ENCODE measurements at regions of chr5 and their contacts with region 1.

Region 1: GRCh38 chr5:142713121-142713706 is 27.3 kb upstream of the FGF1 start:
- DNase-seq: peak; percentile 79 to 90 (median 86)
- H3K4me3 ChIP-seq: peak overlapping the region; percentile 39 to 51
- H3K4me3 Mint-ChIP-seq: peak overlapping the region; percentile 59 to 78 (median 74)
- H3K27ac ChIP-seq: peak overlapping the region; percentile 23
- H3K27ac Mint-ChIP-seq: peak overlapping the region in 3 of 7 donors; percentile 22 to 72 (median 23)
- H3K4me1 ChIP-seq: peaks cover 11% of the 10 kb centered on the region
- H3K4me1 Mint-ChIP-seq: peaks cover 7 to 18% (median 10%) of the 10 kb centered on the region in 4 donors
- H3K27me3 ChIP-seq: no peaks in the 10 kb centered on the region
- H3K27me3 Mint-ChIP-seq: peaks cover 0 to 3% of the 10 kb centered on the region in 2 donors

Region 2: DNA sequence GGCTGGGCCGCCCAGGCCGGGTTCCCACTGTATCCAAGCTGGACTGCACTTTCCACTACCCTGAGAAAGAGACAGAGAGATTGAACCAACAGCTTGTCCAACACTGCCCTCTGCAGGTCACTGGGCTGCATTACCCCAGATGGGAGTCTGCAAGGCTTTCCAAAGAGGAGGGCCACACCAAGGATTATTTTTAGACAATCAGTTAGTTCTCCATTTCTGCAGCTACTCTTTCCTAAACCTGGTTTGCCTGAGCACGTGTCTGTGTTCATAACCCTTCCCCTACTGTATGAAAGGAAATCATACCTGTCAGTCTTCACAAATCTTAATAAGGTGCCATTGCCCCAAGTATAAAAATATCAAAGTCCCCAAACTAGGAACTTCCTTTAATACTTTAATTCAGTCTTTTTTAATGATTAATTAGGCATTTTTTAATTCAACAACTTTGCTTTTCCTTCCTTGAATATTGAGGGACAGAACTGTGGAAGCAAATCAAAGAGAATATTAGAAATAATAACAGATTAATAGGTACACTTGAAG is 14.0 kb before region 1 on chr5:
- CTCF ChIA-PET with region 1: interaction called, 71 read pairs
- POLR2A ChIA-PET with region 1: interaction called, 3 read pairs
- intact Hi-C with region 1: no loop called
- DNase-seq: peak; percentile 68 to 73 (median 72)
- H3K4me3 ChIP-seq: no peak overlapping the region
- H3K4me3 Mint-ChIP-seq: no peak overlapping the region
- H3K27ac ChIP-seq: no peak overlapping the region
- H3K27ac Mint-ChIP-seq: no peak overlapping the region
- H3K4me1 ChIP-seq: no peaks in the 10 kb centered on the region
- H3K4me1 Mint-ChIP-seq: peaks cover 0 to 2% (median under 1%) of the 10 kb centered on the region in 4 donors
- H3K27me3 ChIP-seq: no peaks in the 10 kb centered on the region
- H3K27me3 Mint-ChIP-seq: peaks cover 2% of the 10 kb centered on the region in 2 donors

Region 3: GRCh38 chr5:142748568-142749249 is 35.5 kb after region 1 on chr5:
- CTCF ChIA-PET with region 1: interaction called, 39 read pairs
- POLR2A ChIA-PET with region 1: no interaction called
- intact Hi-C with region 1: loop called (anchors 2 kb)
- DNase-seq: peak in 4 of 5 donors; percentile 40 to 49 (median 45)
- H3K4me3 ChIP-seq: no peak overlapping the region
- H3K4me3 Mint-ChIP-seq: no peak overlapping the region
- H3K27ac ChIP-seq: no peak overlapping the region
- H3K27ac Mint-ChIP-seq: no peak overlapping the region
- H3K4me1 ChIP-seq: no peaks in the 10 kb centered on the region
- H3K4me1 Mint-ChIP-seq: peaks cover 0 to 11% (median 0%) of the 10 kb centered on the region in 4 donors
- H3K27me3 ChIP-seq: no peaks in the 10 kb centered on the region
- H3K27me3 Mint-ChIP-seq: peaks cover 0 to 6% of the 10 kb centered on the region in 2 donors

Region 4: DNA sequence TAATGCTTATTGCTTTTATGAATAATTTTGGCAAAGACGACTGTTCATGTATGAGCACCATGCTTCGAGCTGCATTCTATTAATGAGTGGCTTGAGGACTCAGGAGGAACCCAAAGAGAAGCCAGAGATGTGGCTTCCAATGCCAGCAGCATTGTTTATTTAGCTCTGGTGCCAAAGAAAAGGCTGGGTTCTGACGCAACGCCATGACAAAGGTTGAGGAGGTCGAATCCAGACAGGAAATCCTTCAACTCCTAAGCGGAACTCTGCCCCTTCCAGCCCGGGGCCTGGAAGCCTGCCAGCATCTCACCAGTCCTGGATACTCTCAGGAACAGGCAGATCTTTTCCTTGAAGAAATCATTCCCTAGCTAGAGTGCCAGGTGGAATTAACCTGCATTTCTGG is 161.3 kb after region 1 on chr5:
- CTCF ChIA-PET with region 1: interaction called, 252 read pairs
- POLR2A ChIA-PET with region 1: no interaction called
- intact Hi-C with region 1: no loop called
- DNase-seq: no peak
- H3K4me3 ChIP-seq: no peak overlapping the region
- H3K4me3 Mint-ChIP-seq: no peak overlapping the region
- H3K27ac ChIP-seq: no peak overlapping the region
- H3K27ac Mint-ChIP-seq: no peak overlapping the region
- H3K4me1 ChIP-seq: no peaks in the 10 kb centered on the region
- H3K4me1 Mint-ChIP-seq: peaks cover 0 to 3% (median 0%) of the 10 kb centered on the region in 4 donors
- H3K27me3 ChIP-seq: no peaks in the 10 kb centered on the region
- H3K27me3 Mint-ChIP-seq: no peaks in the 10 kb centered on the region

Region 5: DNA sequence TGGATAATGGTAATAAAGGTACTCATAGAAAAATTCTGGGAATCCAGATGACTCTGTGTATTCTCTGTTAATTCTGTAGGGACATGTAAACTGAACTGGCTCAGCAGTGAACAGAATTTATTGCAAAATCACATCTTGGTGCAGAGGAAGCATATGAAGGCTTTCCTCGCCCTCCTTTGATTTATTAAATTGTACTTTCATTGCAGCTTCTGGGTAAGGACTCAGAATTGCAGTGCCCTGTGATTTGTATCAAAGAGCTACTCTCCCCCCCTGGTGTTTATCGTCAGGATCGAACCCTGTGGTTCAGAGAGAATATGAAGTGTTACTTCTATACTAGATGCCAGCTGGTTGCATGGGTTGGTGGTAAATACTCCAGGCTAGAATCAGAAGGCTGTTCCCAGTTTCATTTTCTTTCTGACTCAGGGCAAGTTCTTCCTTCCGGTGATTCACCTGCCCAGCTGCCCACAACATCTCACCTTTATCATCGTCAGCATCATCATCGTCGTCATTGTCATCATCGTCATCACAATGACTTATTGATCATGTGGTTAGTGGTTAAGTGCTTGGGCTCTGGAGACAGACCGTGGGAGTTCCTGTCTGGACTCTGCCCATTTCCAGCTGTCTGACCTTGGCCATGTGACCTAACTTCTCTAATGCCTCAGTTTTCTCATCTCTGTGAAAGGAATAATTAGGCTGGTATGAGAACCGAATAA is 295.8 kb after region 1 on chr5:
- CTCF ChIA-PET with region 1: interaction called, 4 read pairs
- POLR2A ChIA-PET with region 1: no interaction called
- intact Hi-C with region 1: loop called (anchors 2 kb)
- DNase-seq: peak; percentile 83 to 96 (median 87)
- H3K4me3 ChIP-seq: no peak overlapping the region
- H3K4me3 Mint-ChIP-seq: peak overlapping the region; percentile 23 to 71 (median 68)
- H3K27ac ChIP-seq: peak overlapping the region; percentile 63
- H3K27ac Mint-ChIP-seq: peak overlapping the region; percentile 84 to 97 (median 94)
- H3K4me1 ChIP-seq: peaks cover 49% of the 10 kb centered on the region
- H3K4me1 Mint-ChIP-seq: peaks cover 31 to 56% (median 40%) of the 10 kb centered on the region in 4 donors
- H3K27me3 ChIP-seq: no peaks in the 10 kb centered on the region
- H3K27me3 Mint-ChIP-seq: no peaks in the 10 kb centered on the region

Region 6: GRCh38 chr5:144191998-144192397 is 1478.8 kb after region 1 on chr5:
- CTCF ChIA-PET with region 1: interaction called, 7 read pairs
- POLR2A ChIA-PET with region 1: no interaction called
- intact Hi-C with region 1: loop called (anchors 5 kb)
- DNase-seq: peak; percentile 73 to 86 (median 82)
- H3K4me3 ChIP-seq: peak overlapping the region in 1 of 2 donors; percentile 32
- H3K4me3 Mint-ChIP-seq: no peak overlapping the region
- H3K27ac ChIP-seq: peak overlapping the region; percentile 78
- H3K27ac Mint-ChIP-seq: no peak overlapping the region
- H3K4me1 ChIP-seq: peaks cover 55% of the 10 kb centered on the region
- H3K4me1 Mint-ChIP-seq: peaks cover 0 to 40% (median 35%) of the 10 kb centered on the region in 4 donors
- H3K27me3 ChIP-seq: no peaks in the 10 kb centered on the region
- H3K27me3 Mint-ChIP-seq: no peaks in the 10 kb centered on the region

Measured in CD4-positive, alpha-beta memory T cell (primary cell).